ENCODE measurements at regions of chr12 and their contacts with region 1.

Region 1: DNA sequence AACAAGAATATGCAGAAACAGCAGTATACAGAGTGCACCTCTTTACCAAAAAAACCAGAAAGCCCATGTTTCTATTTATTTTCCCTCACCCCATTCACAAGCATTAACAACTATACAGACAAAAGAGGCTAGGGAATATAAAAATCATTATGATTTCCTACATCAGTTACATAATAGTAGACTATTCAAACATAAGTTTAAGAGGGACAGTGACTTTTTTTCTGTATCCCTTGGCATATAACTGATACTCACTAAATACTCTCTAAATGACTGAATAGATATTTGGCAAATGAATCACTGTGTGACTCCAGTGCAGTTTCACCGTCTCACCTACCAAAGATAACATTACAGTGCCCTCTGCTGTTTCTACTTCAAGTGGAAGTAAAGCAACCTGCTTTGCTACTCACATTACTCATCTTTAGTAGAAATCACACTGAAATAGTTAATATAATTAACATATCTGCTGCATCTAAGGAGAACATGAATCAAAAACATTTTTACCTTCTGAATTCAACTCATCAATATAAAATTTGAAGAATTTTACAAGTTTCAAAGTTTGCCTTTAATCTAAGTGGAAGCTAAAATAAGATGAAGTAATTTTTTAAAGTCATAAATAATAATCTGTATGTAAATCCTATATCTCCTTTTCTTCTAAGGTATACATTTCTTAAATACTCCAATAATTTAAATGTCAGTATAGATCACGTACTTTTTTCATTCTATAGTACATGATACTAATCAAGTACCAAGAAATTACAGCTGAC is 103.8 kb downstream of the OSBPL8 start:
- DNase-seq: no peak
- H3K4me3 ChIP-seq: no peak overlapping the region
- H3K27ac ChIP-seq: peak overlapping the region in 1 of 2 donors; percentile 29
- H3K4me1 ChIP-seq: no peaks in the 10 kb centered on the region
- H3K27me3 ChIP-seq: no peaks in the 10 kb centered on the region
- CTCF ChIP-seq: peak in 2 of 3 experiments; percentile 40 to 63

Region 2: DNA sequence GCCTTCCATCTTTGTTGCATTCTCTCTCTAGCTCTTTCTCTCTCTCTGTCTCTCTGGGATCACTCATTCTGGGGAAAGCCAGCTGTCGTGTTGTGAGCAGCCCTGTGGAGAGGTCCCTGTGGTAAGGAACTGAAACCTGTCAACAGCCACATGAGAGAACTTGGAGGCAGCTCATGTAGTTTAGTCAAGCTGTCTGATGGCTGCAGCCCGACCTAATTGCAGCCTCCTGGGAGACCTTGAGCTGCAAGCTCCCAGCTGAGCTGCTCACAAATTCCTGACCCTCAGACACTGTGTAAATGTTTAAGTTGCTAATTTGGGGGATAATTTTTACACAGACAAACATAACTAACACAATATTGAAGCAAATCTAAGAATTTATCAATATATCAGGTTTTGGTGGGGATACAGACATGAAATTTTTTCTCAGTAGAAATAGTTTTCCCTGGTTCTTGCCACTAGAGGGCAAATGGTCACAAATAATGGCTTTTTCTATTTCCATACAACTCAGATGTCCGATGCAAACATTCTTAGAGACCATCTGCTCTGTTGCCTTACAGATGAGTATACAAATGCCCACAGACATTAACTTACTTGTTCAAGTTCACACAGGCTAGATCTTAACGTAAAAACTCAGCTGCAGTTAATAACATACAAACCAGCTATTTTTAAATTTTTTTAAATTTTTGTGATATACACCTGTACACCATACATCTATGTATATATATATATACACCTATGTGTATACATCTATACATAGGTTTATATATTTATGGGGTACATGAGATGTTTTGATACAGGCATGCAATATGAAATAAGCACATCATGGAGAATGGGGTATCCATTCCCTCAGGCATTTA is 928.9 kb before region 1 on chr12:
- intact Hi-C with region 1: loop called (anchors 10 kb)
- DNase-seq: no peak
- H3K4me3 ChIP-seq: no peak overlapping the region
- H3K27ac ChIP-seq: no peak overlapping the region
- H3K4me1 ChIP-seq: no peaks in the 10 kb centered on the region
- H3K27me3 ChIP-seq: no peaks in the 10 kb centered on the region
- CTCF ChIP-seq: peak; percentile 37 to 72 (median 37)

Region 3: DNA sequence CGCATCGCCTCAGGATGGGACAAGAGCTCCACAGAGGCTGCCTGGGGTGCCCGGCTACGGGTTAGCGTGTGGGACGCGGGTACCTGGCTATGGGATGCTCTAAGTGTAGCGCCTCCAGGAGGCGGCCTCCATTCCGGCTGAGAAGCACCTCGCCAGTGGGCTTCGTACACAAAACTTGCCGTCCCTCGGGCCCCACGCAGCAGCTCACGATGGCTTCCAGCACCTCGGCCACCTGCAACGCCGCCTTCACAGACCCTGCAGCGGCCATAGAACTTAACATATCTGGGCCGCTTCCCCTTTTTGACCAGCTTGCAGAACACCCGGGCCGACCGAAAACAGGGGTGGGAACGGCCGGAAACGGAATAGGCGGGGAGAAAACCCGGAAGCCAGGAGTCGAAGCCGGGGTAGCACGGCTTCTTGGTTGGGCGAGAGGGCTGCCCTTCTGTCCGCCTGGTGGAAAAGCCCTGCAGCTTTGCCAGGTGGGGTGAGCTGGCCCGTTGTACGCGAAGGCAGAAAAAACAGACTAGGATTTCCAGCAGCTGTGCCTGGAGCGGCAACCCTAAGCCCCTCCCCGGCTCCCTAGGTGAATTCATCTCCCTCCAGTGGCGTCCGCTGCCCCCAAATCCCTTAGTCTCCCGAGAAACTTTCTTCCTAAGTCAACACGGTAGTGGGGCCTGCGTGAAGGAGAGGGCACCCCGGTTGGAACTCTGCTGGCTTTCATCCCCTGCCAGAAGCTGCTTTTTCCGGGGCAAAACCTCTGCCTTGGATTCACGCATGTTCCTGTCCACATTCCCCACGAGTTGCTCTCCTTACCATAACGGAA is 107.5 kb before region 1 on chr12 and contains the start of gene BBS10:
- intact Hi-C with region 1: loop called (anchors 5 kb)
- DNase-seq: peak; percentile 65 to 94
- H3K4me3 ChIP-seq: peak within 1 kb of the TSS; percentile 70 to 85
- H3K27ac ChIP-seq: peak within 1 kb of the TSS; percentile 84 to 86
- H3K4me1 ChIP-seq: peaks cover 6 to 22% of the 10 kb centered on the region in 2 donors
- H3K27me3 ChIP-seq: no peaks in the 10 kb centered on the region
- CTCF ChIP-seq: peak; percentile 12 to 48 (median 17)
- total RNA-seq, gene BBS10: 3.8 TPM

Measured in ascending aorta (tissue), 2 donors.